PC-9 (cell line): ENCODE measurements at regions of chr22 and their contacts with region 1.

Region 1: DNA sequence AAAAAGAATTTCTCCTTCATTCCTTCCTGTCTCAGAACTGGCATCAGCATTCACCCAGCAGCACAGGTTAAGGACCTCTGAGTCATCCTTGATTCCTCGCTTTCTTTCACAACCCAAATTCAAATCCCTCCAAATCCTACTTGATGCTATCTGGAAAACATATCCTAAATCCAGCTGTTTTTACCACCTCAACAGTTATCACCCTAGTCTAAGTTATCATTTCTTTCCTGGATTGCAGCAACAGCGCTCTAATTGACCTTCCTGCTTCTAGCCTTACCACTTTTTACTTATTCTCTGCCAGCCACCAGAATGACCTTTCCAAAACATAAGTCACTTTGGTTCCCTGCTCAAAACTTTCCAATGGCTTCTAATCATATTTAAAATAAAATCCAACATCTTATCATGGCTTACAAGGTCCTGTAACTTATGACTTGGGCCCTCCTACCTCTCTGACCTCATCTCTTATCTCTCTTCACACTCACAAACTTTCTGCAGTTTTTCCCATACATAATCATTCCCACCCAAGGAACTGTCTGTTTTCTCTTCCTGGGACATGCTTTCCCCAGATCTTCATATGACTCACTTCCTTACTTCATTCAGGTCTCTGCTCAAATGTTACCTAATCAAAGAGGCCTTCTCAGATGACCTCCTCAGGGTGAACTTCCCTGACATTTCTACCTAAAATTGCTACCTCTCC is 119.4 kb downstream of the TTC28 start:
- DNase-seq: peak; percentile 1 to 63
- H3K4me3 ChIP-seq: no peak overlapping the region
- H3K27ac ChIP-seq: peak overlapping the region; percentile 63
- H3K4me1 ChIP-seq: peaks cover 16% of the 10 kb centered on the region
- H3K27me3 ChIP-seq: no peaks in the 10 kb centered on the region
- CTCF ChIP-seq: no peak

Region 2: GRCh38 chr22:28410050-28410816 is 150.0 kb before region 1 on chr22:
- CTCF ChIA-PET with region 1: no interaction called
- POLR2A ChIA-PET with region 1: no interaction called
- intact Hi-C with region 1: no loop called
- DNase-seq: no peak
- H3K4me3 ChIP-seq: no peak overlapping the region
- H3K27ac ChIP-seq: no peak overlapping the region
- H3K4me1 ChIP-seq: no peaks in the 10 kb centered on the region
- H3K27me3 ChIP-seq: no peaks in the 10 kb centered on the region
- CTCF ChIP-seq: no peak

Region 3: DNA sequence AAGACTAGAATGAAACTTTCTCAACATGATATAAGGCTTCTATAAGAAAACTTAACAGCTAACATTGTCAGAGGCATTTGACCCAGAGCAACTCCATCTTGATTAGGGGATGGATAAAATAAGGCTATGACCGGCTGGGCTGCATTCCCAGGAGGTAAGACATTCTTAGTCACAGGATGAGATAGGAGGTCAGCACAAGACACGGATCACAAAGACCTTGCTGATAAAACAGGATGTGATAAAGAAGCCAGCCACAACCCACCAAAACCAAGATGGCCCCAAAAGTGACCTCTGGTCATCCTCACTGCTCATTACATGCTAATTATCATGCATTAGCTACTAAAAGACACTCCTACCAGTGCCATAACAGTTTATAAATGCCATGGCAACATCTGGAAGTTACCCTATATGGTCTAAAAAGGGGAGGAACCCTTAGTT is 15.7 kb before region 1 on chr22:
- CTCF ChIA-PET with region 1: no interaction called
- POLR2A ChIA-PET with region 1: no interaction called
- intact Hi-C with region 1: loop called (anchors 1 kb)
- DNase-seq: peak; percentile 30 to 66
- H3K4me3 ChIP-seq: no peak overlapping the region
- H3K27ac ChIP-seq: no peak overlapping the region
- H3K4me1 ChIP-seq: peaks cover 21% of the 10 kb centered on the region
- H3K27me3 ChIP-seq: no peaks in the 10 kb centered on the region
- CTCF ChIP-seq: no peak

Region 4: DNA sequence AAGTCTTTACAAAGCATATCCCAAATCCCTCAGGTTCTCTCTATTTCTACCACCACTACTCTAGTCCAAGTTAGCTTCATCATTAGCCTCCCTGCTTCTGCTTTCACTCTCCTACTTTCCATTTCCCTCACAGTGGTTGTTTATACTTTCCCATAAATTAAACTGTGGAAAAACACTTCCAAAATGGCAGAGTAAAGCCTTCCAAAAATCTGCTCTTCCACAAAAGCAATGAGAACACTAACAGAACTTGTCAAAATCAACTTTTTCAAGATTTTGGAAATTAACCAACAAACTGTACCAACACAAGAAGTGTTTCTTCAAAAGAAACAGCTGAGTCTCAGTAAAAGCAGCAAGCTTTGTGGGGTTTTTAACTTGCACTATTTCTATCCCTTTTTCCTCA is 47.6 kb after region 1 on chr22:
- CTCF ChIA-PET with region 1: no interaction called
- POLR2A ChIA-PET with region 1: interaction called, 15 read pairs
- intact Hi-C with region 1: no loop called
- DNase-seq: no peak
- H3K4me3 ChIP-seq: no peak overlapping the region
- H3K27ac ChIP-seq: no peak overlapping the region
- H3K4me1 ChIP-seq: no peaks in the 10 kb centered on the region
- H3K27me3 ChIP-seq: no peaks in the 10 kb centered on the region
- CTCF ChIP-seq: no peak